Gastrocnemius medialis (tissue), 4 donors: ENCODE measurements at regions of chr16 and their contacts with region 1.

Region 1: DNA sequence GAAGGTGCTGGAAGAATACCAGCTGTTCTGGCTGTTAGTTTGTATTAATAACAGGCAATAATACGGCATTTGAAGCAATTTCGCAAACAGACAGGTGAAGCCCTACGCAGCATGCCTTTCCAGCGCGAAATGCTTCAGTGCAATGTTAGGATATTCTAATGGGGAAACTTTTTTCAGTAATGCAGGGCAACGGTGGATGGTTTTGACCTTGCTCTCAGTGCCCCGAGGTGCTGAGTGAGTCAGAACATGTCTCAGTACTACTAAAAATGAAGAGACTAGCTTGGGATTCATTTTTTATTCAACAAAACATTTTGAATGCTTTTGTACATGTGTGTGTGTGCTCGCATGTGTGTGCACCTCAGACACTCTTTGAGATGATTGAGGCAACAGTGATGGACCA is 172.2 kb downstream of the RBFOX1 start:
- DNase-seq: no peak
- ATAC-seq: no peak
- H3K4me3 ChIP-seq: no peak overlapping the region
- H3K27ac ChIP-seq: peak overlapping the region in 3 of 4 donors; percentile 36 to 92 (median 81)
- H3K4me1 ChIP-seq: peaks cover 40 to 47% of the 10 kb centered on the region in 2 donors
- H3K27me3 ChIP-seq: no peaks in the 10 kb centered on the region
- CTCF ChIP-seq: no peak
- POLR2A ChIP-seq: no peak

Region 2: GRCh38 chr16:7321661-7322060 is 183.2 kb before region 1 on chr16:
- in situ Hi-C with region 1: no loop called
- intact Hi-C with region 1: loop called (anchors 5 kb)
- DNase-seq: no peak
- ATAC-seq: no peak
- H3K4me3 ChIP-seq: no peak overlapping the region
- H3K27ac ChIP-seq: no peak overlapping the region
- H3K4me1 ChIP-seq: peaks cover 21 to 27% of the 10 kb centered on the region in 2 donors
- H3K27me3 ChIP-seq: no peaks in the 10 kb centered on the region
- CTCF ChIP-seq: no peak
- POLR2A ChIP-seq: no peak

Region 3: GRCh38 chr16:7405166-7405852 is 99.5 kb before region 1 on chr16:
- in situ Hi-C with region 1: no loop called
- intact Hi-C with region 1: loop called (anchors 5 kb)
- DNase-seq: peak; percentile 70 to 86
- ATAC-seq: peak; percentile 93 to 97
- H3K4me3 ChIP-seq: peak overlapping the region in 1 of 4 donors; percentile 31
- H3K27ac ChIP-seq: peak overlapping the region; percentile 55 to 75 (median 66)
- H3K4me1 ChIP-seq: peaks cover 45 to 50% of the 10 kb centered on the region in 2 donors
- H3K27me3 ChIP-seq: no peaks in the 10 kb centered on the region
- CTCF ChIP-seq: peak; percentile 48 to 75 (median 59)
- POLR2A ChIP-seq: no peak

Region 4: GRCh38 chr16:7577588-7577987 is 72.7 kb after region 1 on chr16:
- in situ Hi-C with region 1: no loop called
- intact Hi-C with region 1: loop called (anchors 5 kb)
- DNase-seq: peak; percentile 18 to 72
- ATAC-seq: peak; percentile 84 to 93
- H3K4me3 ChIP-seq: no peak overlapping the region
- H3K27ac ChIP-seq: peak overlapping the region; percentile 62 to 76 (median 68)
- H3K4me1 ChIP-seq: peaks cover 3 to 4% of the 10 kb centered on the region in 2 donors
- H3K27me3 ChIP-seq: no peaks in the 10 kb centered on the region
- CTCF ChIP-seq: no peak
- POLR2A ChIP-seq: no peak